ENCODE measurements at regions of chr20 and their contacts with region 1.

Region 1: GRCh38 chr20:1965520-1966351 is 28.1 kb downstream of the PDYN start:
- DNase-seq: peak; percentile 79 to 86
- ATAC-seq: peak; percentile 79 to 98 (median 90)
- H3K4me3 ChIP-seq: peak overlapping the region; percentile 39
- H3K27ac ChIP-seq: no peak overlapping the region
- H3K4me1 ChIP-seq: peaks cover 7% of the 10 kb centered on the region
- H3K27me3 ChIP-seq: peaks cover 0 to 5% (median 0%) of the 10 kb centered on the region in 3 donors
- CTCF ChIP-seq: peak; percentile 94

Region 2: DNA sequence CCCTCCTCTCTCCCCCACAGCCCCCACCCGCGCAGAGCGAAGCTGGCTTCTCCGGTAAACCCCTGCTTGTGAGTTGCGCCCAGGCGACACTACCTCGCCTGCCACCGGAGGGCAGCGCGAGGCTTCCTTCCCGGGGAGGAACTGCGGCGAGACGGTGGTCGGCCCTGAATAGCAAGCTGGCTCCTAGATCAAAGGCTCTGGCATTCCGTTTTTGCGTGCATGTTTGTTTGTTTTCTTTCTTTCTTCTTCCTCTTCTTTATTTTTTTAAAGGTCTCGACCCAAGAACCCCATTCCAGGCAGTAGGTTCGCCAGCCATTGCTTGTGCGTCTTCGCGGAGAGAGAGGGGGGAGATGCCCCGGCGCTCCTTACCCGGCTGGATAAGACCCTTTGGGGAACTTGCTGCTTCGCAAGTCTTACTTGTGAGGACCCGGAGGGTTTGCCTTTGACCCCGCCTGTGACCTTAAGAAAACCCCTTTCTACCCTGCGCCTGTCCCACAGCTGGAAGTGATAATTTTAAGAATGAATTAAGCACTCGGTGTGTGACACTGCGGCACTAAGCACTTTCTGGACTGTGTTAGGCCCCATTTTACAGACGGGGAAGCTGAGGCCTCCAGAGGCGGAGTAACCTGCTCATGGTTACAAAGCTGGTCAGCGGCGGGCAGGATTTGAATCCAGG is 163.2 kb before region 1 on chr20:
- intact Hi-C with region 1: loop called in 1 of 2 experiments (anchors 10 kb)
- DNase-seq: peak; percentile 65 to 82
- ATAC-seq: peak; percentile 81 to 93 (median 88)
- H3K4me3 ChIP-seq: peak overlapping the region; percentile 77
- H3K27ac ChIP-seq: peak overlapping the region; percentile 61
- H3K4me1 ChIP-seq: peaks cover 20% of the 10 kb centered on the region
- H3K27me3 ChIP-seq: peaks cover 0 to 13% (median 0%) of the 10 kb centered on the region in 3 donors
- CTCF ChIP-seq: peak; percentile 60

Region 3: GRCh38 chr20:2086177-2086979 is 120.6 kb after region 1 on chr20:
- intact Hi-C with region 1: loop called in 1 of 2 experiments (anchors 5 kb)
- DNase-seq: no peak
- ATAC-seq: peak in 1 of 4 donors; percentile 42
- H3K4me3 ChIP-seq: no peak overlapping the region
- H3K27ac ChIP-seq: no peak overlapping the region
- H3K4me1 ChIP-seq: no peaks in the 10 kb centered on the region
- H3K27me3 ChIP-seq: peaks cover 0 to 12% (median 2%) of the 10 kb centered on the region in 3 donors
- CTCF ChIP-seq: no peak

Region 4: GRCh38 chr20:2109425-2110210 is 143.9 kb after region 1 on chr20:
- intact Hi-C with region 1: no loop called
- DNase-seq: peak; percentile 31 to 88
- ATAC-seq: peak; percentile 51 to 91 (median 74)
- H3K4me3 ChIP-seq: no peak overlapping the region
- H3K27ac ChIP-seq: peak overlapping the region; percentile 40
- H3K4me1 ChIP-seq: peaks cover 48% of the 10 kb centered on the region
- H3K27me3 ChIP-seq: no peaks in the 10 kb centered on the region
- CTCF ChIP-seq: no peak

Measured in psoas muscle (tissue), 8 donors.